WTC11 (cell line): ENCODE measurements at regions of chr9 and their contacts with region 1.

Region 1: DNA sequence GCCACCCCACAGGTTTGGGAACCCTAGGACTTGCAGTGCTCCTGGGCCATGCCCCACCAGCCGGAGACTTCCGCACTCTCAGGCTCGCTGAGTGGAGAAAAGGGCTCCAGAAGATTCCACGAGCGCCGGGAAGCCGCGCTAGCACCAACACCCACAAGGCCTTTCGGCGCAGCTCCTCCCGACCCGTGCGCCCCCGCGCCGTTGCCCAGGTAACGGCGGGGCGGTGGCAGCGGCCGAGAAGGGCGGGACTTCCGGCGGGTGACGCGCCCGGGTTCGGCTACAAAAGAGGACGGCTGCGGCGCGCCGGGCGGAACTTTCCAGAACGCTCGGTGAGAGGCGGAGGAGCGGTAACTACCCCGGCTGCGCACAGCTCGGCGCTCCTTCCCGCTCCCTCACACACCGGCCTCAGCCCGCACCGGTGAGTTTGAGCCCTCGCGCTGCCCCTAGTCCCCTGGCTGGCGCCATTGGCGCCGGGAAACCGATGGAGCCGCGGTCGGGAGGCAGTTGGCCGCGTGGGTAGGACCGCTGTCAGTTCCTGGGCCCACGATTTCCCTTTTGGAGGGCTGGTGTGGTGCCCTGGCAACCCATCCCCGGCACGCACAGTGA is at the start of gene DNAJA1:
- DNase-seq: peak; percentile 93
- ATAC-seq: peak; percentile 89
- H3K4me3 Mint-ChIP-seq: peak within 1 kb of the TSS; percentile 93
- H3K27ac Mint-ChIP-seq: peak within 1 kb of the TSS; percentile 85
- H3K4me1 Mint-ChIP-seq: peaks cover 29% of the 10 kb centered on the region
- H3K27me3 Mint-ChIP-seq: no peaks in the 10 kb centered on the region
- CTCF ChIP-seq: no peak
- total RNA-seq, gene DNAJA1: 74.5 to 96.5 TPM (median 95.6 TPM) in 3 replicates

Region 2: DNA sequence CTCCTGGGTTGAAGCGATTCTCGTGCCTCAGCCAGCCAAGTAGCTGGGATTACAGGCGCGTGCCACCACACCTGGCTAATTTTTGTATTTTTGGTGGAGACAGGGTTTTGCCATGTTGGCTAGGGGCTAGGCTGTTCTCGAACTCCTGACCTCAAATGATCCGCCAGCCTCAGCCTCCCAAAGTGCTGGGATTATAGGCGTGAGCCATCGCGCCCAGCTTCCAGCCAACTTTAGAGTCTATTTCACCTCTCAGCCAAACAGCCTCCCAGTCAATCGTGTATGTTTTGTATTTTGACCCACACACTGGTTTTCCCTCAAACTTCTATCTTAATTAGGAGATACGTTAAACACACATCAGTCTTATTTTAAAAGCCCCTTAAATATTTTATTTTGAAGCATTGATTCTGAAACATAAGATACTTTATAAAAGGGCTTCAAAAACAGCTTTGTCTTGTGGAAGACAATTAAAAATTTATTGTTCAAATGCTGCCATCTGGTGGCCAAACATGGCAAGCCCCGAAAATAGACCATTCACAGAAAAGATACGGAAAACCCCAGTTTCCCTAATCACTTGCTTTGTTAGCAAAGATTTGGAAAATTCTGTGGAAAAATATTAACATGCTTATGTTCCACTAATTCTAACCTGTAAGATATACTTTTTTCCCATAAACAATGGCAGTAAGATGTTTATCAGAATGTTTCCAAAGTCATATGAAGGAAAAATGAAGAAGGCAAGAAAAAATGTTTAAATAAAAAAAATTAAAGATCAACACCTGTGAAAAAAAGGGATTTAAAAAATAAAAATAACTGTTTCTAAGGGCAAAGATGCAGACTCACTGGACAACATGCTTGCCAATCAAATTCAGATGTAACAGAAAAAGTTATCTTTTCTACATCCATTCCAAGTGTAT is 56.7 kb before region 1 on chr9:
- CTCF ChIA-PET with region 1: no interaction called
- POLR2A ChIA-PET with region 1: no interaction called
- DNase-seq: peak; percentile 62
- ATAC-seq: no peak
- H3K4me3 Mint-ChIP-seq: no peak overlapping the region
- H3K27ac Mint-ChIP-seq: no peak overlapping the region
- H3K4me1 Mint-ChIP-seq: peaks cover 2% of the 10 kb centered on the region
- H3K27me3 Mint-ChIP-seq: no peaks in the 10 kb centered on the region
- CTCF ChIP-seq: peak; percentile 66

Region 3: DNA sequence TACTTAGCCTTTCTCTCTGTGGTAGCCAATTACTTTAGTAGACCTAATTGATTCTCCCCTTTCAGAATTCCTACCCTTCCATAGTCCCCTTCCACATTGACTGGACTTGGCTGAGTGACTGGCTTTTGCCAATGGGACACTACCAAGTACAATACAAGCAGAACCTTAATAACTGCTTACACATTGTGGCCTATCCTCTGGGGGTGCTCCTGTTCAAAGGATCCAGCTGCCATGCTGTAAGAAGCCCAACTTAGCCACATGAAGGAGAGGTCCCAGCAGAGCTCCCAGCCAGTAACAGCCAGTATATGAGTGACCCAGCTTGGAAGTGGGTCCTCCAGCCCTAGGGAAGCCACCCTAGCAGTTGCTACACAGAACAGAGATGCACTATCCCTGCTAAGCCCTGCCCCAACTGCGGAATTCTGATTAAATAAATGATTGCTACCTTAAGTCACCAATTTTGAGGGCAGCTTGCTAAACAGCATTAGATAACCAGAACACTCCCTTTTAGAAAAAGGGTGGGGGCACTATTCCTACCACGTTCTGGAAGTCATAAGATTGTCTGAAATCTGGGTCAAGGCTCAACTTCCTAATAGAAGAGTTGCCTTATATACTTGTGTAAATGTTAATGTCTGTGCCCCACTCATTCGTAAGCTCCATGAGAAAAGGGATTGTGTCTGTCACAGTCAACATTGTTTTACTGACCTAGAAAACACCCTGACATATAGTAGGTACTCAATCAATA is 12.6 kb before region 1 on chr9:
- CTCF ChIA-PET with region 1: interaction called, 3 read pairs
- POLR2A ChIA-PET with region 1: interaction called, 10 read pairs
- DNase-seq: no peak
- ATAC-seq: no peak
- H3K4me3 Mint-ChIP-seq: no peak overlapping the region
- H3K27ac Mint-ChIP-seq: no peak overlapping the region
- H3K4me1 Mint-ChIP-seq: peaks cover 27% of the 10 kb centered on the region
- H3K27me3 Mint-ChIP-seq: no peaks in the 10 kb centered on the region
- CTCF ChIP-seq: no peak

Region 4: DNA sequence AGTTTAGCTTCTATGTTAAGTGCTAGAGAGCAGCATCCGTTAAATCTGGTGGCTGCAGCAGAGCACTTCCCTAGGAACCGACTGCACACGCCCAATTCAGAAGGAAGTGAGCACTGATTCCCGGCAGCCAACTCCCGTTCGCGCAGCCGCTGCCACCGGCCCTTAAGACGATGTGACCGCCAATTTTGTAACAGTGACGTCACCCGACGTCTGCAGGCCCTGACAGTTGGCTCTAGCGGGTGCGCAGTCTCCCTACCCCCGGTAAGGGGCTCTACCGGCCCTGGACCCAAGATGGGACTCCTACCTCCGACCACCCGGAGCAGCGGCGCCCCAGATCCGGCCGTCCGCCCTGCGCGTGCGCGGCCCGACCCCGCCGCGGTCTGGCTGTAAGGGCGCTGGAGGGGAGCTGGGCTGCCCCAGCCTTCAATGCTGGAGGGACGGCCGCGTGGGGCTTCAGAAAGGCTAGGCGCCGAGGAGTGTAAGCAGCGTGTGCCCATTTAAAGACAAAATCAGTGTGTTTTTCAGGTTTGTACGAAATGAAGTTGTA is 19.1 kb after region 1 on chr9:
- CTCF ChIA-PET with region 1: interaction called, 5 read pairs
- POLR2A ChIA-PET with region 1: interaction called, 11 read pairs
- DNase-seq: peak; percentile 69
- ATAC-seq: peak; percentile 88
- H3K4me3 Mint-ChIP-seq: peak overlapping the region; percentile 78
- H3K27ac Mint-ChIP-seq: peak overlapping the region; percentile 82
- H3K4me1 Mint-ChIP-seq: peaks cover 19% of the 10 kb centered on the region
- H3K27me3 Mint-ChIP-seq: no peaks in the 10 kb centered on the region
- CTCF ChIP-seq: no peak

Region 5: GRCh38 chr9:33106827-33107621 is 82.0 kb after region 1 on chr9:
- CTCF ChIA-PET with region 1: no interaction called
- POLR2A ChIA-PET with region 1: no interaction called
- DNase-seq: peak; percentile 31
- ATAC-seq: peak; percentile 50
- H3K4me3 Mint-ChIP-seq: no peak overlapping the region
- H3K27ac Mint-ChIP-seq: no peak overlapping the region
- H3K4me1 Mint-ChIP-seq: peaks cover 31% of the 10 kb centered on the region
- H3K27me3 Mint-ChIP-seq: no peaks in the 10 kb centered on the region; the same call in 1 of the 2 replicates
- CTCF ChIP-seq: no peak

Region 6: DNA sequence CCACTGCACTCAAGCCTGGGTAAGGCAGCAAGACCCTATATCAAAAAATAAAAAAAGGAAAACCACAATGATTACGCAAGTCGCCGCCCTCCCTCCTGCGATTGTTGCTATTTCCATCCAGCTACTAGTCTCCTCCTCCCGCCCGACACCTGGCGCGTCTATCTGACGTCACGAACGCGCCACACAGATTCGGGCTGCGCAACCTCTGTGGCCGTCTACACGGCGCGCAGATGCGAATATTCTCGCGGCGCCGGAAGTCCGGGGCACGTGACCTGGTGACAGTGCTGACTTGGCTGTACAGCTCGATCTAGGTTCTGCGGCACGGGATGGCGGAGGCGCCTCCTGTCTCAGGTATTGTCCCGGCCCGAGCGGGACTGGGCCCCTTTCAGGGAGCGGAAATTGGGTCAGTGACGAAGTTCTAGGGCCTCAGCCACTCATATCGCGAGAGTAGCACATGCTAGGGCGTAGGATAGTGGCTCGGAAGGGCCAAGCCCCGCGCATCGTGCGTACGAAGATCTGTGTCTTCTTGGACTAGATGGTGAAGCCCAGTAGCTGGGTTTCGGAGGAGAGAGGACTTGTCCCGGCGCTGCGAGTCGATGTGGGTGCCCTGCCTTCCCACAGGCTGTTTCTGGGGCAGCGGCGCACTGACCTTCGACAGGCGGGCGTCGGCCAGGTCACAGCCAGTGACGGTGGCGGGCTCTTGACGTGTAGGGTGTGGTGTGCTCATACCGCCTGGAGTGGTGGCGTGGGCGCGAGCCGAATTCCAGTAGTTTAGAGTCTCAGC is 265.4 kb after region 1 on chr9 and contains the start of gene NFX1:
- CTCF ChIA-PET with region 1: interaction called, 4 read pairs
- POLR2A ChIA-PET with region 1: interaction called, 11 read pairs
- DNase-seq: peak; percentile 96
- ATAC-seq: peak; percentile 90
- H3K4me3 Mint-ChIP-seq: peak within 1 kb of the TSS; percentile 99
- H3K27ac Mint-ChIP-seq: peak within 1 kb of the TSS; percentile 99
- H3K4me1 Mint-ChIP-seq: peaks cover 14% of the 10 kb centered on the region
- H3K27me3 Mint-ChIP-seq: no peaks in the 10 kb centered on the region
- CTCF ChIP-seq: no peak
- total RNA-seq, gene NFX1: 25.4 to 30.9 TPM (median 26.5 TPM) in 3 replicates

Region 7: GRCh38 chr9:33366979-33367480 is 342.0 kb after region 1 on chr9:
- CTCF ChIA-PET with region 1: no interaction called
- POLR2A ChIA-PET with region 1: no interaction called
- DNase-seq: no peak
- ATAC-seq: no peak
- H3K4me3 Mint-ChIP-seq: no peak overlapping the region
- H3K27ac Mint-ChIP-seq: no peak overlapping the region
- H3K4me1 Mint-ChIP-seq: no peaks in the 10 kb centered on the region
- H3K27me3 Mint-ChIP-seq: no peaks in the 10 kb centered on the region
- CTCF ChIP-seq: no peak